HEK293T (cell line): ENCODE measurements at regions of chr14 and their contacts with region 1.

Region 1: DNA sequence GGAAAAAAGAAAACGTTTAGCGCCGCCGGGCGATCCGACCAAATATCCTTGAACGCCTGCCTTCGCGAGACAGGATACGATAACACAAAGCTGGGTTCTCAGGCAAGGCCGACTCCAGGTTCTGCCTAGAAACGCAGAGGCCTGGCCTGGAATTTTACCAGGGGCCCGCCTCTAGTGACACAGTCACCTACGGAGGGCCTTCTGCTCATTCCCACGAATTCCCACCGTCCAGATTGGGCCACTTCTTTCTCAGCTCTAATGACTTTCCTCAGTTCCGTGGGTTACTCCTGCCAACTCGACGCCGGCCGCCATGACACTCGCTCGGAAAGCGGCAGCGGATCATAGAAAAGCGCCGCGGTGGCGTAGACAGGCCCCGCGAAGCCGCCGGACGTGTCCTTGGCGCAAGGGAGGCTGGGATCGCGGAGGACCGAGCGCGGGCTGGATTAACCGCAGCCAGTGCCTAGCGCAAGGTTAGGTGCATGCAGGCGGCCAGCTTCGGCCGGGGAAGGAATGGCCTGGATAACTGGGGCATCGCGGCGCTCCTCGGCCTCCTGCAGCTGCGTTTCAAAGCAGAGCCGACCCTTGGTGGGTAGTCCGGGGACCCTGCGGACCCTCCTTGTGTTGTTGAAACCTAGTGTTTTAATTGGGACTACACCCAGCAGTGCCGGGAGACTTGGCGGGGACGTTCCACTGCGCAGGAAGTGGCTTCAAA is at the start of gene TRIP11:
- DNase-seq: peak; percentile 89

Region 2: GRCh38 chr14:91968280-91968679 is 71.6 kb before region 1 on chr14:
- CTCF ChIA-PET with region 1: no interaction called
- POLR2A ChIA-PET with region 1: no interaction called
- DNase-seq: no peak

Region 3: DNA sequence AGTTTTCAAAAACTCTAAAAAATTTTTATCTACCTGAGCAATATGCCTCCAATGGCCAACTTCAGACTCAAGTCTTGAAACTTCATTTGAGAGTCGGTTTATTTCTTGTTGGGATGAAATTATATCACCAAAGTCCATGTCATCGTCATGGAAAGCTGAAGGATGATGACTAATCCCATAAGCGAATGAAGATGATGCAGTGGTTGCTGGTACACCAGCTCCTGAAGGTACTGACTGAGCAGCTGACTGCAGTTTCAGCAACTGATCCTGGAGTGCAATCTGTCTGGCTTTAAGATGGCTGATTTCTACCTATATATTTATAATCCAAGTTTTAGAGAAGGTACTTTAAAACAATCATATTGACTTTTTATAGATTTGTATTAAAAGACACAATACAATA is 18.4 kb before region 1 on chr14:
- CTCF ChIA-PET with region 1: no interaction called
- POLR2A ChIA-PET with region 1: interaction called, 14 read pairs
- DNase-seq: no peak

Region 4: GRCh38 chr14:92057976-92058917 is 18.4 kb after region 1 on chr14:
- CTCF ChIA-PET with region 1: no interaction called
- POLR2A ChIA-PET with region 1: interaction called, 18 read pairs
- DNase-seq: no peak

Region 5: GRCh38 chr14:92106143-92106926 is 66.5 kb after region 1 on chr14 and contains the start of gene ATXN3:
- CTCF ChIA-PET with region 1: no interaction called
- POLR2A ChIA-PET with region 1: interaction called, 20 read pairs
- DNase-seq: peak; percentile 97

Region 6: GRCh38 chr14:92121670-92122350 is 81.9 kb after region 1 on chr14 and contains the starts of genes CPSF2 and NDUFB1:
- CTCF ChIA-PET with region 1: no interaction called
- POLR2A ChIA-PET with region 1: interaction called, 20 read pairs
- DNase-seq: peak; percentile 90

Region 7: GRCh38 chr14:92225731-92226130 is 185.9 kb after region 1 on chr14:
- CTCF ChIA-PET with region 1: no interaction called
- POLR2A ChIA-PET with region 1: no interaction called
- DNase-seq: no peak

Region 8: GRCh38 chr14:92748259-92749016 is 708.6 kb after region 1 on chr14 and contains the start of gene LGMN:
- CTCF ChIA-PET with region 1: interaction called, 13 read pairs
- POLR2A ChIA-PET with region 1: interaction called, 5 read pairs
- DNase-seq: peak; percentile 96